Cardiac septum (tissue), 1 donor: ENCODE measurements at regions of chr3 and their contacts with region 1.

Region 1: GRCh38 chr3:50365080-50365841 is 5.9 kb upstream of the TMEM115 start:
- DNase-seq: peak; percentile 95

Region 2: DNA sequence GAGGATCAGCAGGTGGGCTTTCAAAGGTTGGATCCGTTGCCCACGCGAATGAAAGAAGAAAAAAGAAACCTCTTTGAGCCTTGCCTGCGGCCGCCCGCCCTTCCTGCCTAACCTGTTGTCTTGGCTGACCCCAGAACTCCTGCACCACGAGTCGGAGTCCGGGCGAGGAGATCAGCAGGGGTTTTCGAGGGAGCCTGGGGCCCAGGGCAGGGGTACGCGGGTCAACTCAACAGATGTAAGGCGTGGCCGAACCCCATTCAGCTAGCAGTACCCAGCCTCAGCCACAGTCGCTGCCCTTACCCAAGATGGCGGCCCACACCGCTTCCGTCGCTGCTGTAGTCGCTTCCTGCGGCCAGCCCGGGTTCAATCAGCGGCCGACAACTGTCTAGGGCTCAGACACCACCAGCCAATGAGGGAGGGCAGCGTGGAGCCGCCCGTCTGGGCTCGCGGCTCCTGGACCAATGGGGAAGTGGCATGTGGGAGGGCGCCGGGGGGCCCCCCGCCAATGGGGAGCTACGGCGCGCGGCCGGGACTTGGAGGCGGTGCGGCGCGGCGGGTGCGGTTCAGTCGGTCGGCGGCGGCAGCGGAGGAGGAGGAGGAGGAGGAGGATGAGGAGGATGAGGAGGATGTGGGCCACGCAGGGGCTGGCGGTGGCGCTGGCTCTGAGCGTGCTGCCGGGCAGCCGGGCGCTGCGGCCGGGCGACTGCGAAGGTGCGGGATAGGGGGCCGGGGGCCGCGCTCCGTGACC is 1019.6 kb after region 1 on chr3 and contains the start of gene MANF:
- intact Hi-C with region 1: loop called (anchors 10 kb)
- DNase-seq: peak; percentile 99
- total RNA-seq, gene MANF: 77.6 TPM